Lower leg skin (tissue), 4 donors: ENCODE measurements at regions of chr1 and their contacts with region 1.

Region 1: DNA sequence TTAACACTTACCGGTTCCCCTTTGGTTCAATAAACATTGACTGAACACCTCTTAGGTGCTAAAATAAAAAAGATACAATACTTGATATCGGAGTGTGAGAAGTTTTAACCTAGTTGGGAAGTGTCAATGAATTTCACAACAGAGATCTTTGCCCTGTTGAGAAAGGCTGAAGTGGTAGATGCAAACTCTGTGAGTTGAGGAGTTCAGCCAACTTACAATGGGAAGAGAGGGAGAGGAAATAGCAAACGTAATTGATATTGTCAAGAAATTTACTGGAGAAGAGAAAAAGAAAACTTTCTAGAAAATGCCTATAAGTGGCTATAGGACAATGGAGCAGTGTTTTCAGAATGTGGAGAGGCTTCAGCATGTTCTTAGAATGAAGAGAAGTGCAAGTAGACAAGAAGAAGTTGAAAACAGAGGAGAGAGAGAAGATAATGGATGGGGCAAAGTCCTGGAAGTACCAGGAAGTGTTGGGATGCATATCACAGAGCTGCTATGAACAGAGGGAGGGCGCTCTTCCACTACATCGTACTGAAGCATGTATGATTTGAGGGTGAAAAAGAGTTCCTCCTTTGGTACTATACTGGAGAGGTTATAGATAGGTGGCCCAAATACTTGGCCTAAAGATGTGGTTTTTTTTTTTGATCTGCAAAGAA is 48.9 kb downstream of the MEF2D start:
- DNase-seq: no peak
- H3K4me3 ChIP-seq: no peak overlapping the region
- CTCF ChIP-seq: no peak
- POLR2A ChIP-seq: no peak

Region 2: DNA sequence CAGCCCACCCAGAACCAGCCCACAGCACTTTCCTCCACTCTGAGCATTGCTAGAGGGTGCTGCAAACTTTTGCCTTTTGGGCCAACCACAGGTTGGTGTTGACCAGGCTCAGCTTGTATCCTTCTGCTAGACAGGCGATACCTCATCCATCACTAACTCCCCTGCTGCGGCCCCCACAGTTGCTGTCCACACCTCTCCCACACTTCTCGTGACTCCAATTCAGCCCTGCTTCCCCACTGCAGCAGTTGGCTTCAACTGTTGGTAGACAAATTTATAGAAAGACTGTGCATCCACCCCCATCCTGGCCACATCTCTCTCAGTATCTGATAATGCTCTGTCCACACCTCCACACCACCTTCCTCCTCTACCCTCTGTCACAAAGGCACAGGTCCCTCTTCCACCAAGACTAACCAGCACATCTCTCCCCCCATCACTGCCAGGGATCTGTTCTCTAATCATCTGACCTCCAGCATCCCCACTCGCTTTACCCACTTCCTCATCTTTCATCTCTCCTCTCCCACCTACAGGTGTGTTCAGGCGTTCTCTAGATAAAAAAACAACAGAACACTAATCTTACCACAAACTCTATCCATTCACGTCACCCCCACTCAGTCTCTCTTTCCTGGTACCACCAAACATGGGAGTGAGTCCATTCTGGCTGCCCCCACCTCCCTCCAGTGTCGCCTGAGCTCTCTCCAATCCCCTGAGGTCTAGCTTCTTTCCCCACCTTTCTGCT is 273.5 kb before region 1 on chr1:
- intact Hi-C with region 1: no loop called
- DNase-seq: no peak
- H3K4me3 ChIP-seq: no peak overlapping the region
- CTCF ChIP-seq: no peak
- POLR2A ChIP-seq: no peak

Region 3: DNA sequence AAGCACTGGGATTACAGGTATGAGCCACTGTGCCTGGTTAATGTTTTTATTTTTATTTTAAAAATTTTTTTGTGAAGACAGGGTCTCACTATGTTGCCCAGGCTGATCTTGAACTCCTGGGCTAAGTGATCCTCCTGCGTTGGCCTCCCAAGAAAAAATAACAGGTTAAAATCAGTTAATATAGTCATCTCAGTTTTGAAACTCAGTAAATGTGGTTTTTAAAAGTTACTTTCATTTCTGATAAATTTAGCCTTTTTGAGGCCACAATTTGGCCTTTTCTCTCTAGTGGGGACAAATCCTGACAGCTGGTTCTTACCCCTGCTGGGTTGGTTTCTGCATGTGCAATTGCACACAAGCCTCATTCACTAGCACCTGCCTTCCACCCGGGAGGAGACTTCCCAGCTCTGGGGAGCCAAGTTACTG is 225.5 kb before region 1 on chr1:
- intact Hi-C with region 1: no loop called
- DNase-seq: no peak
- H3K4me3 ChIP-seq: no peak overlapping the region
- CTCF ChIP-seq: no peak
- POLR2A ChIP-seq: no peak

Region 4: GRCh38 chr1:156399355-156400125 is 52.1 kb before region 1 on chr1:
- intact Hi-C with region 1: loop called (anchors 2 kb)
- DNase-seq: no peak
- H3K4me3 ChIP-seq: no peak overlapping the region
- CTCF ChIP-seq: no peak
- POLR2A ChIP-seq: no peak